ENCODE measurements at regions of chr9 and their contacts with region 1.

Region 1: GRCh38 chr9:121326130-121326838 is 43.8 kb downstream of the STOM start:
- DNase-seq: peak; percentile 98

Region 2: GRCh38 chr9:121213136-121213806 is 113.0 kb before region 1 on chr9:
- intact Hi-C with region 1: no loop called
- DNase-seq: peak; percentile 96

Region 3: GRCh38 chr9:121281561-121282310 is 44.5 kb before region 1 on chr9:
- intact Hi-C with region 1: loop called in 1 of 2 experiments (anchors 5 kb)
- DNase-seq: peak; percentile 93

Region 4: DNA sequence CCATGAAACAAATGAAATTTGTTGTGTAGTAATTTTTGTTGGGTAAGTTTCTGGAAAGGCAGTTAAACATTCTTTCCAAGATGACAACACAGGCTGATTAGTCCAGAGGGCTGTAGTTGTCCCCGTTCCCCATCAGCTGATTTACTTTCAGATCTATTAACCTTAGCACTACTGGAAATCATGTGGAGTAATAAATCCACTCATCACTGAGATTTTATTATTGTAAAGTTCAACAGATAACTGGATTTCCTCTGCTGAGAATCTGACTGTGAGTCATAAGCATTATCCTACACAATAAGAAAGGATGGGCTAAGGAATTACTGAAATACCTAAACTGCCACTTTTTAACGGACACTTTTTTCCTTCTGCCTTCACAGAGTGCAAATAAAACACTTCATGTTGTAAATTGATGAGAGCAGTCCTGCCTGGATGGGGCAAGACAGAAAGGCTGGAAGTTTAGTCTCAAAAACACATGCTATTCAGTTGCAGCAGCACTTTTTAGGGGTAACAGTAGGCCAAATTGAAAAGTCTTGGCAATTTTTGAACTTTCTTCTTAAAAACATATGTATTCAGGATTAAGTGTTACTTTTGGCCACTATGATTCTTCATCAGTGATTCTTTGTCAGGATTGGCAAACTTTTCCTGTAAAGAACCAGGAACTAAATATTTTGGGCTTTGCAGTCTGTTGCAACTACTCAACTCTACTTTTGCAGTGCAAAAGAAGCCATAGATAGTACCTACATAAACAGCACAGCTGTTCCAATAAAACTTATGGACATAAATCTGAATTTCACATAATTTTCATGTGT is 36.7 kb after region 1 on chr9:
- intact Hi-C with region 1: loop called (anchors 5 kb)
- DNase-seq: no peak

Region 5: GRCh38 chr9:121369595-121370265 is 43.4 kb after region 1 on chr9 and contains the start of gene STOM:
- intact Hi-C with region 1: loop called (anchors 5 kb)
- DNase-seq: peak; percentile 97
- total RNA-seq, gene STOM: 352 to 371 TPM